ENCODE measurements at regions of chr12 and their contacts with region 1.

Region 1: GRCh38 chr12:89461649-89462612 is 62.7 kb downstream of the GALNT4 start:
- DNase-seq: peak; percentile 74
- ATAC-seq: peak; percentile 73
- H3K4me3 ChIP-seq: no peak overlapping the region
- H3K4me3 Mint-ChIP-seq: no peak overlapping the region
- H3K27ac ChIP-seq: no peak overlapping the region
- H3K27ac Mint-ChIP-seq: no peak overlapping the region
- H3K4me1 ChIP-seq: peaks cover 5 to 7% of the 10 kb centered on the region in 2 donors
- H3K4me1 Mint-ChIP-seq: peaks cover 18% of the 10 kb centered on the region
- H3K27me3 ChIP-seq: no peaks in the 10 kb centered on the region
- H3K27me3 Mint-ChIP-seq: no peaks in the 10 kb centered on the region
- CTCF ChIP-seq: peak; percentile 83

Region 2: GRCh38 chr12:88946372-88946997 is 515.4 kb before region 1 on chr12:
- CTCF ChIA-PET with region 1: no interaction called
- POLR2A ChIA-PET with region 1: no interaction called
- intact Hi-C with region 1: no loop called
- DNase-seq: no peak
- ATAC-seq: no peak
- H3K4me3 ChIP-seq: no peak overlapping the region
- H3K4me3 Mint-ChIP-seq: no peak overlapping the region
- H3K27ac ChIP-seq: no peak overlapping the region
- H3K27ac Mint-ChIP-seq: no peak overlapping the region
- H3K4me1 ChIP-seq: no peaks in the 10 kb centered on the region
- H3K4me1 Mint-ChIP-seq: no peaks in the 10 kb centered on the region
- H3K27me3 ChIP-seq: no peaks in the 10 kb centered on the region
- H3K27me3 Mint-ChIP-seq: peaks cover 8% of the 10 kb centered on the region
- CTCF ChIP-seq: no peak

Region 3: DNA sequence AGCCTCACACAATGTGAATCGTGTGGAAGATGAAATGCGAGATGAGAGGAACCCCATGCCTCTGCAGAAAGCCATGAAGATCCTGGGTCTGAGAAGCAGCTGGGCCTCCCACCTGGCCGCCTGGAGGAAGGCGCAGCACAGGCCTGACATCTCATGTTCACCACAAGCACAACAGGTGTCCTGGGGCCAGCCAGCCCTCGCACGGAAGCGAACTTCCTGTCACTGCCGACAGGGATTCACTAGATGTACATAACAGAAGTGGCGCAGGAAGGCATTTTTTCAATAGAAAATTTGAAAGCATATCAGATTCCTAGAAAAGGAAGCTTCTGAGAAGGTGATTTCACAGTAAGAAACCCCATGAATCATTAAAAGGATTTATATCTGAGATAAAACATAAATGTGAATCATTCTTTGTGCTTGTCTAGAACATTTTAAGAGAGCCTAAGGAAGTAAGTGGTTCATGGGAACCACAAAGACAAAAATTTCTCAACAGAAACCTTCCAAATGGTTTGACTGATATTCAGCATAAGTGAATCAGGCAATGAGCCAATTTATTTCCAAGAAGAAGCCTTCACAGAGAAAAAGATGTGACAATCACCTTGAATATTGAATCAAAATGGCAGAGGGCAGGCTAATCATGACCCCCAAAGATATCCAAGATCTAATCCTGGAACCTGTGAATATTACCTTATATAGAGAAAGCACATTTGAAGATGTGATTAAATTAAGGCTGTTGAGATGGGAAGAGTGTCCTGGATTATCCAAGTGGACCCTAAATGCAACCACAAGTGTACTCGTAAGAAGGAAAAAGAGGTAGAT is 421.6 kb before region 1 on chr12:
- CTCF ChIA-PET with region 1: interaction called, 10 read pairs
- POLR2A ChIA-PET with region 1: no interaction called
- intact Hi-C with region 1: no loop called
- DNase-seq: peak; percentile 53
- ATAC-seq: peak; percentile 65
- H3K4me3 ChIP-seq: no peak overlapping the region
- H3K4me3 Mint-ChIP-seq: no peak overlapping the region
- H3K27ac ChIP-seq: no peak overlapping the region
- H3K27ac Mint-ChIP-seq: no peak overlapping the region
- H3K4me1 ChIP-seq: peaks cover 10 to 11% of the 10 kb centered on the region in 2 donors
- H3K4me1 Mint-ChIP-seq: peaks cover 11% of the 10 kb centered on the region
- H3K27me3 ChIP-seq: no peaks in the 10 kb centered on the region
- H3K27me3 Mint-ChIP-seq: peaks cover 3% of the 10 kb centered on the region
- CTCF ChIP-seq: no peak

Region 4: GRCh38 chr12:89051065-89051677 is 410.8 kb before region 1 on chr12:
- CTCF ChIA-PET with region 1: interaction called, 84 read pairs
- POLR2A ChIA-PET with region 1: no interaction called
- intact Hi-C with region 1: loop called (anchors 1 kb)
- DNase-seq: peak; percentile 74
- ATAC-seq: peak; percentile 53
- H3K4me3 ChIP-seq: no peak overlapping the region
- H3K4me3 Mint-ChIP-seq: no peak overlapping the region
- H3K27ac ChIP-seq: no peak overlapping the region
- H3K27ac Mint-ChIP-seq: no peak overlapping the region
- H3K4me1 ChIP-seq: no peaks in the 10 kb centered on the region
- H3K4me1 Mint-ChIP-seq: no peaks in the 10 kb centered on the region
- H3K27me3 ChIP-seq: no peaks in the 10 kb centered on the region
- H3K27me3 Mint-ChIP-seq: peaks cover 8% of the 10 kb centered on the region
- CTCF ChIP-seq: peak; percentile 88

Region 5: DNA sequence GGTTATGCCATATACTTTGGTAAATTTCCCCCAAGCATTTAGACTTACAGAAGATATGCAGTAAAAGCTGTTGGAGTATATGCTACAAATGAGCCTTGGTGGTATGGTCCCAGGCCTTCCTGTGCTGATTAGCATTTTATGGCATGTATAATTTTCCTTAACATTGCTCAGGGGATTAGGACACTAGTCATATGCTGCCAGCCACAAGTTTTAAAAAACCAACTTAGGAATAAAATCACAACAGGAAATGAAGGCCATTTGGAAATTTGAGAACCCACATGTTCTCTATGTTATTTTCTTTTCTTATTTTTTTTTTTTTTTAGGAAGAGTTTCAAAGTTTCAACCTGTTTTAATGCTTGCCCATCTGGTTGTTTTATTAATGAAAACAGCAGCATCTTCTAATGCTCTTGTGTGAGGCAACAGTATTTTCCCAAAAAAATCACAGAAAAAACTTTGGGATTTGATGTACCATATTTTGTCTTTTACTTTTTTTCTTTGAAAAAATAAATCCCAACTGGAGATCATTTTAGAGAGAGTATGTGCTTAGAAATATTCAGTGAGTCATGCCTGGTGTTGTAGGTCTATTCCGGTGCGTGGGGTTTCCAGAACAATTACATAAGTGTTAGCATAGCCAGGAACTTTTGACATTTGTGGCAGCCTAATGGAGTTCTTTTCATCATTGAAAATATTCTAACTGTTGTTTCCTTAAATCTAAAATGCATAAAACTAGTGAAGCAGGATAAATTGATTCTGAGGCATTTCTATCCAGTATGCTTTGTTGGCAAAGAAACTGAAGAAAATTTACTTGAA is 88.0 kb before region 1 on chr12:
- CTCF ChIA-PET with region 1: no interaction called
- POLR2A ChIA-PET with region 1: no interaction called
- intact Hi-C with region 1: no loop called
- DNase-seq: no peak
- ATAC-seq: no peak
- H3K4me3 ChIP-seq: no peak overlapping the region
- H3K4me3 Mint-ChIP-seq: no peak overlapping the region
- H3K27ac ChIP-seq: no peak overlapping the region
- H3K27ac Mint-ChIP-seq: no peak overlapping the region
- H3K4me1 ChIP-seq: peaks cover 3 to 4% of the 10 kb centered on the region in 2 donors
- H3K4me1 Mint-ChIP-seq: peaks cover 5% of the 10 kb centered on the region
- H3K27me3 ChIP-seq: no peaks in the 10 kb centered on the region
- H3K27me3 Mint-ChIP-seq: no peaks in the 10 kb centered on the region
- CTCF ChIP-seq: no peak

Region 6: DNA sequence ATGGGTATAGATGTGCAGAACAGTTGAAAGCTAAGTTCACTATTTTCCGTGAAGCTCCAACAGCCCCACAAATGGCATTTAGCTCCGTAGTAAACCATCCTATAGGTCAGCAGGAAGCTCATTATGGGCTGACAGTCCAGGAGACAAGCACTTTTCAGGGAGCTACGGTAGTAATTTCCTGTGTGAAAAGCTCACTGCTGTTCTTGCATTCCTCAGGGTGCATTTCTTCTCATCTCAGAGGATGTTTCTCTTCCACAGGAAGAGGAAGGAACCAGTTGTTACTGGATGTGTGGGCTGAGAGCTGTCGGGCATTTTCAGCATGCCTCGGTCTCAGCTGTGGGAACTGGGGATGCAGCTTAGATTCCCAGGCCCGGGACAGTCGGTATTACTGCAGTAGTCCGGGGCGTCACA is 10.1 kb before region 1 on chr12:
- CTCF ChIA-PET with region 1: interaction called, 12 read pairs
- POLR2A ChIA-PET with region 1: no interaction called
- intact Hi-C with region 1: no loop called
- DNase-seq: no peak
- ATAC-seq: no peak
- H3K4me3 ChIP-seq: no peak overlapping the region
- H3K4me3 Mint-ChIP-seq: no peak overlapping the region
- H3K27ac ChIP-seq: no peak overlapping the region
- H3K27ac Mint-ChIP-seq: no peak overlapping the region
- H3K4me1 ChIP-seq: no peaks in the 10 kb centered on the region
- H3K4me1 Mint-ChIP-seq: no peaks in the 10 kb centered on the region
- H3K27me3 ChIP-seq: no peaks in the 10 kb centered on the region
- H3K27me3 Mint-ChIP-seq: no peaks in the 10 kb centered on the region
- CTCF ChIP-seq: no peak

Region 7: DNA sequence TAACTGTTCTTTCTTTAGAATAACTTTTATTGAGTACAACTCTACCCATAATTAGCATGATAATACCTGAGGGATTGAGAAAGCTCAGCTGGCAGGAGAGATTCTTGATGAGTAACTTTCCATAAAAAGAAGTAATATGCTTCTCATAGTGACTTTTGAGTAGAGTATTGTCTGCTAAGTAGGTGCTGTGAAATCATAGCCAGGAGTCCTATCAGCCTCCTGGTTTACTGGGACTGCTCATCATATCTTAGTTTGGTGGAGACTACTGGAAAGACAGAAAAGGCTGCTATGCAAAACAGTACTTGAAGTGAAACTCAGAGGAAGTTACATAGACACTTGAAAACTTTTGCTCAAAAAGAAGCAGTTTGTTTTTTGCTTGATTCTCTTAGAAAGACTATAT is 360.0 kb after region 1 on chr12:
- CTCF ChIA-PET with region 1: no interaction called
- POLR2A ChIA-PET with region 1: no interaction called
- intact Hi-C with region 1: no loop called
- DNase-seq: peak; percentile 47
- ATAC-seq: peak; percentile 60
- H3K4me3 ChIP-seq: no peak overlapping the region
- H3K4me3 Mint-ChIP-seq: peak overlapping the region; percentile 17
- H3K27ac ChIP-seq: peak overlapping the region in 1 of 2 donors; percentile 57
- H3K27ac Mint-ChIP-seq: peak overlapping the region; percentile 85
- H3K4me1 ChIP-seq: peaks cover 4 to 11% of the 10 kb centered on the region in 2 donors
- H3K4me1 Mint-ChIP-seq: peaks cover 26% of the 10 kb centered on the region
- H3K27me3 ChIP-seq: no peaks in the 10 kb centered on the region
- H3K27me3 Mint-ChIP-seq: no peaks in the 10 kb centered on the region
- CTCF ChIP-seq: no peak

Region 8: DNA sequence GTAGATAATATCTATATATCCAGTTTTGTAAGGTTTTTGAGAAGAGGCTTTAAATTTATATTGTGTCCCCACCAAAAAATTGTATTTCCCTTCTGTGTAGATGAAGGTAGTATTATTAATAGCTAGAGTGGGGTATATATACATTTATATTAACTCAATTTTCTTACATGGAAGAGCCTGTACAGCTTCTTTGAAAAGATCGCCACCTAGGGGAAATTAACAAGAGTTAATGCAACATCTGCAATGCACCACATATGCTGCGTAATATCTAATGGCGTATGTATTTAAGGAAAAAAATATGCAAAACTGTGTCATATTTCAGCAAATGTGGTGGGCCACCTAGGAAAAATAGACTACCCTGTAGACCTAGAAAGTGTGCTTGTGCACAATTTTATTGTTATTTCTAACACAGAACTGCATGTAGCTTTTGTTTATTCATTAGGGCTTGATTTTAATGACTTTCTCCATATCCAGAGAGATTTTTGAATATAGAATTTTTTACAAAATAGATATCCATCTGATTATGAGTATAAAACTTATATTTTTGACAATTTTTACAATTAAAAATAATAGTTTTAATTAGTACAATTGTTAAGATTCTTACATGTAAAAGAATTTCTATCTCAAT is 1479.1 kb after region 1 on chr12:
- CTCF ChIA-PET with region 1: no interaction called
- POLR2A ChIA-PET with region 1: no interaction called
- intact Hi-C with region 1: loop called (anchors 10 kb)
- DNase-seq: peak; percentile 23
- ATAC-seq: no peak
- H3K4me3 ChIP-seq: no peak overlapping the region
- H3K4me3 Mint-ChIP-seq: no peak overlapping the region
- H3K27ac ChIP-seq: no peak overlapping the region
- H3K27ac Mint-ChIP-seq: no peak overlapping the region
- H3K4me1 ChIP-seq: no peaks in the 10 kb centered on the region
- H3K4me1 Mint-ChIP-seq: no peaks in the 10 kb centered on the region
- H3K27me3 ChIP-seq: peaks cover 0 to 6% (median 0%) of the 10 kb centered on the region in 4 experiments
- H3K27me3 Mint-ChIP-seq: peaks cover 22% of the 10 kb centered on the region
- CTCF ChIP-seq: peak; percentile 66

Measured in B cell (primary cell).